ENCODE measurements at regions of chr10 and their contacts with region 1.

Region 1: GRCh38 chr10:86376852-86377796 is 10.5 kb upstream of the GRID1 start:
- DNase-seq: peak; percentile 33 to 56
- ATAC-seq: peak; percentile 80 to 91
- H3K4me3 ChIP-seq: peak overlapping the region; percentile 17 to 55 (median 40)
- H3K27ac ChIP-seq: no peak overlapping the region
- H3K4me1 ChIP-seq: peaks cover 2 to 4% of the 10 kb centered on the region in 2 donors
- H3K27me3 ChIP-seq: peaks cover 8 to 18% (median 9%) of the 10 kb centered on the region in 3 donors
- CTCF ChIP-seq: peak; percentile 92 to 100 (median 98)
- POLR2A ChIP-seq: no peak

Region 2: GRCh38 chr10:84537447-84537931 is 1839.6 kb before region 1 on chr10:
- in situ Hi-C with region 1: loop called in 3 of 4 experiments (anchors 10 to 25 kb)
- intact Hi-C with region 1: no loop called
- DNase-seq: peak in 1 of 2 donors; percentile 32
- ATAC-seq: peak; percentile 72 to 89
- H3K4me3 ChIP-seq: no peak overlapping the region
- H3K27ac ChIP-seq: no peak overlapping the region
- H3K4me1 ChIP-seq: peaks cover 0 to 4% of the 10 kb centered on the region in 2 donors
- H3K27me3 ChIP-seq: peaks cover 18 to 22% (median 22%) of the 10 kb centered on the region in 3 donors
- CTCF ChIP-seq: peak; percentile 85 to 93 (median 89)
- POLR2A ChIP-seq: no peak

Region 3: DNA sequence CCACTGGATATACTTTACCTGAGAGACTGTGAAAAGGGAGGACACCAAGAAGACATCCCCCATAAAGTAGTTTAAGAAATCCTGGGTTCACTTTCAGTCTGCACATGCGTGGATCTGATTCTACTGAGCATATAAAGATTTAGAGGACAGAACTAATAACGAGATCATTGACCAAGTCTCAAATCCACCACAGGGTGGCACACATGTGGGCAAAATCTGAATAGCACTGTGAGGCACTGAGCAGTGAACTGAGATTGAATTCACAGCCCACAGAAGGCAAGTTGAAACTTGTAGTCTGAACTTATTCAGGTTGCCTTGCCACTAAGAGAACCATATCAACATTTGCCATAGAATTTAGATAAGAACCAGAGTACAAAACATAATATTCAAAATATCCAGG is 829.1 kb before region 1 on chr10:
- in situ Hi-C with region 1: loop called in 1 of 4 experiments (anchors 10 kb)
- intact Hi-C with region 1: loop called (anchors 10 kb)
- DNase-seq: no peak
- ATAC-seq: peak in 1 of 2 donors; percentile 39
- H3K4me3 ChIP-seq: no peak overlapping the region
- H3K27ac ChIP-seq: no peak overlapping the region
- H3K4me1 ChIP-seq: no peaks in the 10 kb centered on the region
- H3K27me3 ChIP-seq: peaks cover 0 to 4% (median 0%) of the 10 kb centered on the region in 3 donors
- CTCF ChIP-seq: peak in 1 of 5 experiments; percentile 29
- POLR2A ChIP-seq: no peak

Region 4: GRCh38 chr10:85995791-85996190 is 381.3 kb before region 1 on chr10:
- in situ Hi-C with region 1: loop called in 2 of 4 experiments (anchors 25 kb)
- intact Hi-C with region 1: loop called (anchors 2 kb)
- DNase-seq: no peak
- ATAC-seq: peak in 1 of 2 donors; percentile 54
- H3K4me3 ChIP-seq: no peak overlapping the region
- H3K27ac ChIP-seq: no peak overlapping the region
- H3K4me1 ChIP-seq: no peaks in the 10 kb centered on the region
- H3K27me3 ChIP-seq: no peaks in the 10 kb centered on the region
- CTCF ChIP-seq: peak in 3 of 5 experiments; percentile 26 to 50 (median 50)
- POLR2A ChIP-seq: no peak

Region 5: DNA sequence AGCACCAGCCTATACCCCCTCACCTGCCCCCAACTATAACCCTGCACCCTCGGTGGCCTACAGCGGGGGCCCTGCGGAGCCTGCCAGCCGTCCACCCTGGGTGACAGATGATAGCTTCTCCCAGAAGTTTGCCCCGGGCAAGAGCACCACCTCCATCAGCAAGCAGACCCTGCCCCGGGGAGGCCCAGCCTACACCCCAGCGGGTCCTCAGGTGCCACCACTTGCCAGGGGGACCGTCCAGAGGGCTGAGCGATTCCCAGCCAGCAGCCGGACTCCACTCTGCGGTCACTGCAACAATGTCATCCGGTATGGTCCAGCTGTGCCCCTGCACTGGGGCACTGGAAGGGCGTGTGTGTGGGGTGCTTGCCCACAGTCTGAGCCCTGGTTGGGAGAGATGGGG is 339.3 kb after region 1 on chr10:
- in situ Hi-C with region 1: no loop called
- intact Hi-C with region 1: no loop called
- DNase-seq: no peak
- ATAC-seq: no peak
- H3K4me3 ChIP-seq: no peak overlapping the region
- H3K27ac ChIP-seq: peak overlapping the region; percentile 61 to 97 (median 72)
- H3K4me1 ChIP-seq: peaks cover 24 to 44% of the 10 kb centered on the region in 2 donors
- H3K27me3 ChIP-seq: no peaks in the 10 kb centered on the region
- CTCF ChIP-seq: no peak
- POLR2A ChIP-seq: no peak